ENCODE measurements at regions of chr17 and their contacts with region 1.

Region 1: DNA sequence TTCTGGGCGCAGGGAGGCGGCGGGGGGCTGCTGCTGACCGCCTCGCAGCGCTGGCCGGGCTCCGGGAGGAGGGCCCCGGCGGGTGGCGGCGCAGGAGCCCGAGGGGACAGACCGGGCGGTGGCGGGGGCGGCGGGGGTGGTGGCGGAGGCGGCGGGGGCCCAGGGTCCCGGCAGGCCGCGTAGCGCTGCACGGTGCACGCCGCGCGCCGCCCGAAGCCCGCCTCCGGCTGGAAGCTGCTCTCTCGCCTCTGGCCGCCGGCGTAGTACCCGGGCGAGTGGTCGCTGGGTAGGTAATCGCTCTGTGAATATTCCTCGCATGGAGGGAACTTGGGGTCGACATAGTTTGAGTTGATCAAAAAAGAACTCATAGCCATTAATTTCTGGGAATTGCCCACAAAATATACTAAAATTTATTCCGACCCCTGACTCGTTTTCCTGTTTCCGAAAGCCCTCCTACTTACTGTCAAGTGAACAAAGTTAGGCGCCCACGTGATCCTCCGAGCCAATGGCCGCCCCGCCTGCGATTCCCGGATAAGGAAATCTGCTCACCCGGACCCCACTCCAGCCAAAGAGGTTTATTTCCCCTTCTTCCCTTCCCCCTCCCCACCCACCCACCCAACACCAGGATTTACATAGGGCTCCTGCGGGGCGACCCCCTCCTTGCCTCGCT is at the start of gene HOXB4:
- DNase-seq: peak; percentile 98
- H3K4me3 ChIP-seq: peak within 1 kb of the TSS; percentile 66 to 90 (median 77)
- H3K27ac ChIP-seq: peak within 1 kb of the TSS; percentile 91 to 97 (median 96)
- H3K4me1 ChIP-seq: peaks cover 32 to 84% (median 79%) of the 10 kb centered on the region in 4 donors
- H3K27me3 ChIP-seq: no peaks in the 10 kb centered on the region
- CTCF ChIP-seq: no peak
- EP300 ChIP-seq: no peak
- POLR2A ChIP-seq: no peak
- total RNA-seq, gene HOXB4: 3.5 to 8.3 (median 5.0) TPM

Region 2: GRCh38 chr17:48270896-48271295 is 307.2 kb before region 1 on chr17:
- intact Hi-C with region 1: no loop called
- DNase-seq: no peak
- H3K4me3 ChIP-seq: no peak overlapping the region
- H3K27ac ChIP-seq: no peak overlapping the region
- H3K4me1 ChIP-seq: peaks cover 0 to 8% (median 2%) of the 10 kb centered on the region in 4 donors
- H3K27me3 ChIP-seq: peaks cover 0 to 33% (median 5%) of the 10 kb centered on the region in 4 donors
- CTCF ChIP-seq: no peak
- EP300 ChIP-seq: no peak
- POLR2A ChIP-seq: no peak

Region 3: DNA sequence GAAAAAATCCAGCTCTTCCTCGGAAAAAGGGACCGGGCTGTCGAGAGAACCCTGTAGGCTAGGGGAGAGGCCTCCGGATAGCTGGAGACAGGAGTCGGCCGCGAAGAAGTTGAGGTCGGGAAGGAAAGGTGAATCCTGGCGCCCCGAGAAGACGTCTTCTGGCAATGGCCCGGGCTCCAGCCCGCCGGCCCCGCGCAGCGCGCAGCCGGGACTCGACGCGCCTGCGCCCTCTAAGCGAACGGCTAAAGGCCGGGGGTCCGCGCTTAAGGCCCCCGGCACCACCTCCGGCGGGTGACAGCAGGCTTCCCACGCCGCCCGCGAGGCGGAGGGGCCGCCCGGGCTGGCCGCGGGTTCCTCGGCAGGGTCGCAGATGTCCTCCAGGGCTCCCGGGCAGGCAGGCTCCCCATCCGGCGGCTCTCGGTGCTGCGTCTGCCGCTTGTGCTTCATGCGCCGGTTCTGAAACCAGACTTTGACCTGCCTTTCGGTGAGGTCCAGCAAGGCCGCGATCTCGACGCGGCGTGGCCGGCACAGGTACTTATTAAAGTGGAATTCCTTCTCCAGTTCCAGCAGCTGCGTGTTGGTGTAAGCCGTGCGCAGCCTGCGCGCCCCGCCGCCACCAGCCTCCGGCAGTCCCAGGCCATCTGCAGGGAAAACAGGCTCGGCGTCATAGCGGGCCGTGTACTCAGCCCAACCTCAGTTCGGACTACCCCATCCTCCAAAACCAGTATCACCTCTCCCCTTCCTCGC is 34.8 kb before region 1 on chr17:
- intact Hi-C with region 1: loop called (anchors 2 kb)
- DNase-seq: no peak
- H3K4me3 ChIP-seq: peak overlapping the region; percentile 79 to 89 (median 80)
- H3K27ac ChIP-seq: peak overlapping the region; percentile 91 to 97 (median 96)
- H3K4me1 ChIP-seq: peaks cover 38 to 53% (median 51%) of the 10 kb centered on the region in 4 donors
- H3K27me3 ChIP-seq: no peaks in the 10 kb centered on the region
- CTCF ChIP-seq: peak in 2 of 3 experiments; percentile 14 to 32
- EP300 ChIP-seq: no peak
- POLR2A ChIP-seq: no peak